Left cardiac atrium (tissue), 4 donors: ENCODE measurements at regions of chr5 and their contacts with region 1.

Region 1: DNA sequence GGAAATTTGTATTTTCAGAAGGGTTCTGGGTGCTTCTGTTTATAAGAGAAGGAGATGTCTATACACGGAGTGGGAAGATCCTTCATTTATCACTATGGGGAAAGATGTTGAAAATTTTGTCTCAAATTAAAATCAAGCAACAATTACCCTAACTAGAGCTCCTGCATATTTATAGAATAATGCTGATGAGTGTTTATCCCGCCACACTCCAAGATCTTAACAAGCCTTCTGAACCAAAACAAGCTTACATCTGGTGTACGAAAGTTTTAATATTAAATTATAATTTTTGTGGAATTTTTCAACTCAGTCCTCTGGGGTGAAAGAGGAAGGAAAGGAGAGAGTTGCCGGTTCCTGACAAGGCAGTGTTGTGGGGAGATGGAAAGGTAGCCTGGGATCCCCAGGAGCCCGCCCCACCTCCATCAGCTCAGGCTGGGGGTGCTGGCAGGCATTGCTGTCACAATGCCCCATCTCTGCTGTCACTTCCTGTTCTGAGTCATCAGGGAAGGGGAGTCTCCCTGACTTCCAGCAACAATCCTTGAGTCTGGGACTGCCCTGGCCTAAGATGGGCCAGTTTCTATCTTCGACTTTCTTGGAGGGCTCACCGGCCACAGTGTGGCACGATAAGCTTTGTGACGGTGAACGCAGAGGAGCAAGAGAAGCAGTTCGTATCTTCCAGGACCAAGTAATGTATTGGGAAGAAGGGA is 64.5 kb downstream of the ERAP1 start:
- DNase-seq: peak; percentile 49
- ATAC-seq: peak; percentile 32 to 80

Region 2: GRCh38 chr5:96662725-96663513 is 80.3 kb before region 1 on chr5:
- intact Hi-C with region 1: loop called in 1 of 2 experiments (anchors 10 kb)
- DNase-seq: peak; percentile 93
- ATAC-seq: peak; percentile 94 to 95

Region 3: GRCh38 chr5:96702503-96703383 is 40.5 kb before region 1 on chr5:
- intact Hi-C with region 1: loop called in 1 of 2 experiments (anchors 5 kb)
- DNase-seq: peak; percentile 97
- ATAC-seq: peak; percentile 98